Heart right ventricle (tissue), 16 donors: ENCODE measurements at regions of chr5 and their contacts with region 1.

Region 1: DNA sequence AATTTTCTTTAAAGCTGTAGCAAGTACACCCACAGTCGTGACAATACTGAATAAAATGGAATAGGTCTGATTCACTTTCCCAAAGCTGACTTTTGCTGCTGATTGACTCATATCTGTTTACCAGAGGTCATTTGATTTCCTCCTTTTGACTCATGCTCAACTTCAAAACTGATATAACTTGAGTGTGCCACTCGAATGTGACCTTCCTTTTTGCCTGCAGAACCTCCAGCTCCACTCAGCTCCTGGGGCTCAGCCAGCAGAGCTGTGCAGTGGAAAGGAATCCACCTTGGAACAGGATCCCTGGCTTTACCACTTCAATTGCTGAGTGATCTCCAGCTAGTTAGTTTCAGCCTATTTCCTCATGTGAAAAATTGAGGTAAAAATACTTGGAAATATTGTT is 84.1 kb downstream of the FEM1C start:
- DNase-seq: peak; percentile 78 to 81
- ATAC-seq: peak; percentile 78 to 93 (median 91)
- H3K4me3 ChIP-seq: no peak overlapping the region
- H3K27ac ChIP-seq: peak overlapping the region; percentile 58 to 86 (median 74)
- H3K4me1 ChIP-seq: peaks cover 0 to 68% (median 46%) of the 10 kb centered on the region in 9 donors
- H3K27me3 ChIP-seq: no peaks in the 10 kb centered on the region
- CTCF ChIP-seq: no peak

Region 2: GRCh38 chr5:115423541-115423940 is 36.9 kb before region 1 on chr5:
- intact Hi-C with region 1: loop called in 3 of 10 experiments (anchors 2 to 5 kb)
- DNase-seq: peak; percentile 64 to 86
- ATAC-seq: peak; percentile 93 to 98 (median 96)
- H3K4me3 ChIP-seq: peak overlapping the region in 6 of 10 donors; percentile 9 to 26 (median 20)
- H3K27ac ChIP-seq: peak overlapping the region; percentile 74 to 92 (median 90)
- H3K4me1 ChIP-seq: peaks cover 27 to 73% (median 47%) of the 10 kb centered on the region in 9 donors
- H3K27me3 ChIP-seq: no peaks in the 10 kb centered on the region
- CTCF ChIP-seq: no peak

Region 3: DNA sequence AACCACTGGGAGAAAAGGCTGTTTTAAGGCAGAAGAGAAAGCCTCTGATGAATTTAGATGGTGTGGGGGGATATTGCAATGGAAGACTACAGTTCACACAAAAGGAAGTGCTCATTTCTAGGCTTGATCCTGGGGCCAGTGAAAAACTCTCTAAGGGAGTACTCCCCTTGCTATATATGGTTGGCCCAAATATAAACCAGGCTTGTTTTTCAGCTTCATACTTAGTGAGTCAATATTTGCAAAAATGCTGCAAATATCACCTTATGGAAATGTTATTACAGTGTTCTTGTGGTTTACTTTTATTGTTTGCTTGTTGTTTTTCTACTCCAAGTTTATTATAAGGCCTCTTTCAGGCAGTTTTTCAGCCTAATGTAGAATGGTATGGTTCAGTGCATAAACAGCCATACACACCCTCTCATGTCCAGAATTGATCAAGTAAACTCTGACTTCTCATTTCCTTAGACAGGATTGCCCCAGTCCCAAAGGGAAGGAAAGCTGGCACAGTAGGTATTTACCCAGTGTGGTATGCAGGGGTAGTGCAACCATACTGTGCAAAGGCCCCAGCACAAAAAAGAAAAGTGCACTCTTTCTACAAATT is 31.0 kb before region 1 on chr5:
- intact Hi-C with region 1: loop called in 3 of 10 experiments (anchors 2 to 5 kb)
- DNase-seq: no peak
- ATAC-seq: no peak
- H3K4me3 ChIP-seq: no peak overlapping the region
- H3K27ac ChIP-seq: no peak overlapping the region
- H3K4me1 ChIP-seq: peaks cover 3 to 41% (median 15%) of the 10 kb centered on the region in 9 donors
- H3K27me3 ChIP-seq: no peaks in the 10 kb centered on the region
- CTCF ChIP-seq: no peak

Region 4: GRCh38 chr5:115440782-115441451 is 19.6 kb before region 1 on chr5:
- intact Hi-C with region 1: no loop called
- DNase-seq: no peak
- ATAC-seq: peak in 1 of 8 donors; percentile 59
- H3K4me3 ChIP-seq: no peak overlapping the region
- H3K27ac ChIP-seq: no peak overlapping the region
- H3K4me1 ChIP-seq: peaks cover 0 to 6% (median 0%) of the 10 kb centered on the region in 9 donors
- H3K27me3 ChIP-seq: no peaks in the 10 kb centered on the region
- CTCF ChIP-seq: no peak

Region 5: DNA sequence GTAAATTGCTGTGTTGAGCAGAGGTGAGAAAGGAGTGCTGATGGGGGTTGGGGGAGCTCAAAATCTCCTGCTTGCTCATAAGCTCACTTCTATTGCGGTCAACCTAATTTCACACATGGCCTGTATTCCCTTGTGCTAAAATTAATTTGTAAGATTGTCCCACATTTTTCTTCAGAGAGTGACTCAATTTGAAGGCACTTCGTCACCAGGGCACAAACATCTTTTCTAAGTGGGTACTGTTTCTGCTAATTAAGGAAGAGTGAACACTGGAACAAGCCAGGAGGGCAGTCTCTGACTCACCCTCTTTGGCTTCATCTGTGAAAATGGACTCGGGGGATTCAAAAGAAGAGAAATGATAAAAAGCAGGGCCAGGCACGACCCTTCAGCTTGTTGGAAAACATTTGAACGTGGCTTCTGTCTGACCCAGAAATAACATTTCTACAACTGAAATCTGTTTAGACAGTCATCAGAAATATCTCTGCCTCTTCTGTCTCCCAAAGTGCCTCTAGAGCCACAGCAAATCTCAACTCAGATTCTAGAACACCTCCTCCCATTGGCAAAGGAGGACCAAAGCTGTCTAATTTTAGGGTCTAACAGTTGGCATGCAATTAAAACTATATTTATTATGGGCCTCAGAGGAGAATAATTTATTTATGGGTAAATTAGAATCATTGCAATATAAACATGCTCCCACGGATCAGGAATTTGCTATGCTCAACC is 34.3 kb after region 1 on chr5:
- intact Hi-C with region 1: loop called in 3 of 10 experiments (anchors 5 kb)
- DNase-seq: no peak
- ATAC-seq: peak in 6 of 8 donors; percentile 38 to 91 (median 64)
- H3K4me3 ChIP-seq: no peak overlapping the region
- H3K27ac ChIP-seq: peak overlapping the region in 5 of 10 donors; percentile 2 to 34 (median 17)
- H3K4me1 ChIP-seq: peaks cover 3 to 23% (median 18%) of the 10 kb centered on the region in 9 donors
- H3K27me3 ChIP-seq: no peaks in the 10 kb centered on the region
- CTCF ChIP-seq: no peak

Region 6: GRCh38 chr5:115530426-115530825 is 70.0 kb after region 1 on chr5:
- intact Hi-C with region 1: loop called in 1 of 10 experiments (anchors 10 kb)
- DNase-seq: no peak
- ATAC-seq: peak in 6 of 8 donors; percentile 48 to 82 (median 62)
- H3K4me3 ChIP-seq: peak overlapping the region in 3 of 10 donors; percentile 5 to 9 (median 9)
- H3K27ac ChIP-seq: peak overlapping the region in 2 of 10 donors; percentile 6 to 37
- H3K4me1 ChIP-seq: peaks cover 0 to 100% (median 82%) of the 10 kb centered on the region in 9 donors
- H3K27me3 ChIP-seq: no peaks in the 10 kb centered on the region
- CTCF ChIP-seq: no peak

Region 7: GRCh38 chr5:115571441-115571878 is 111.0 kb after region 1 on chr5:
- intact Hi-C with region 1: loop called in 1 of 10 experiments (anchors 5 kb)
- DNase-seq: peak in 1 of 2 donors; percentile 47
- ATAC-seq: peak; percentile 59 to 91 (median 76)
- H3K4me3 ChIP-seq: no peak overlapping the region
- H3K27ac ChIP-seq: peak overlapping the region in 3 of 10 donors; percentile 0 to 24 (median 19)
- H3K4me1 ChIP-seq: peaks cover 0 to 28% (median 10%) of the 10 kb centered on the region in 9 donors
- H3K27me3 ChIP-seq: no peaks in the 10 kb centered on the region
- CTCF ChIP-seq: peak in 3 of 9 donors; percentile 14 to 27 (median 26)